ENCODE measurements at regions of chr7 and their contacts with region 1.

Region 1: DNA sequence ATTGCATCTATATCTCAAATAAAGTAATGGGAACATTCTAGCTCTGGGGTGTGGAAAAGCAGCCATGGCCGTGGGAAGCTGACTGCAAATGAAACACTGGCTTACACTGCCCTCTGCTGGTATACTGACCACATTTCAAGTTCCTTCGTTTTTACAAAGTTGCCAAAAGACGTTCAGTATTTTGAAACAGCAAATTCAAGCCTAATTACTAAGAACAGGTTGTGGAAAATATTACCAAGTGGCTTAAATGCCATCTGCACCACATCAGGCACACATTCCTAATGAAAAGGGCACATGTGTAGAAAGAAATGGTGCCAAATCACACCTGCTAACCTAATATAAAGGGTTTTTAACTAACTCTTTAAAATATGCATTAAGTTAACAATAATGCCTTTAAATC is 83.9 kb downstream of the JAZF1 start:
- DNase-seq: peak; percentile 51
- ATAC-seq: no peak
- H3K4me3 Mint-ChIP-seq: no peak overlapping the region
- H3K27ac Mint-ChIP-seq: no peak overlapping the region
- H3K4me1 Mint-ChIP-seq: no peaks in the 10 kb centered on the region
- H3K27me3 Mint-ChIP-seq: no peaks in the 10 kb centered on the region

Region 2: DNA sequence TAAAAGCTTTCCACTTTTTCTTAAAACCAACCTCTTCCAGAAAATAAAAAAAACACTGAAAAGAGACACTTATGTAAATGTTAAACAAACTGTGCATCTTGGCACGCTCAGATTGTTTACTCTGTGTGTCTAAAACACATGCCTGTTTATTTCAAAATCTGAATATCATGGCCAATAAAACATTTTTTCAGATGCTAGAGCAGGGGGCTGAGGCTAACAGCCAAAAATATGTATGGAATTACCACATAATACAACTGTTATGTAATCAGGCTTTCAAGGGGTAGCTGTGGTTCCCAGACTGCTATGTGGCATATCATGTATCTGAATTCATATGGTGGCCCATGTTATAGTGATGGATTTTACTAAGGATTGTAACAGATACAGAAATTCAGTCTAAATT is 564.4 kb before region 1 on chr7:
- CTCF ChIA-PET with region 1: no interaction called
- POLR2A ChIA-PET with region 1: no interaction called
- DNase-seq: no peak
- ATAC-seq: no peak
- H3K4me3 Mint-ChIP-seq: no peak overlapping the region
- H3K27ac Mint-ChIP-seq: no peak overlapping the region
- H3K4me1 Mint-ChIP-seq: no peaks in the 10 kb centered on the region
- H3K27me3 Mint-ChIP-seq: no peaks in the 10 kb centered on the region

Region 3: DNA sequence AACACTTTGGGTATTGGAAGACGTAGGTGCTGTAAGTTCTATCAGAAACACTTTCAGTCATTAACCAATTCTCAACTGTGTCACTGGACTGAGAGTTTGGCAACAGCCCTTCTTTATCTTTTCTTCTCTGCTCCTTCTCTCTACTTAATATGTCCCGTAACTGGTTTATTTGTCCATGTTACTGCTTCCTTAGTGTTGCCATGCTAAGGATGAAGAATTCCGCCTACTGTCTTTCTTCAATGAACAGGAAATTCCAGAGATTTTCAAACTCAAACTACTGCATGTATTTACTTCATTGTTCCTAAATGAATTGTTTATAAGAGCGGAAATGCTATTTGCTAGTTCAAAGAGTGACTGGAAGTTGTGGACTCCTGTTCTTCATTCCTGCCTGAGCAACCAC is 213.0 kb before region 1 on chr7:
- CTCF ChIA-PET with region 1: no interaction called
- POLR2A ChIA-PET with region 1: no interaction called
- DNase-seq: no peak
- ATAC-seq: no peak
- H3K4me3 Mint-ChIP-seq: no peak overlapping the region
- H3K27ac Mint-ChIP-seq: no peak overlapping the region
- H3K4me1 Mint-ChIP-seq: no peaks in the 10 kb centered on the region
- H3K27me3 Mint-ChIP-seq: no peaks in the 10 kb centered on the region

Region 4: DNA sequence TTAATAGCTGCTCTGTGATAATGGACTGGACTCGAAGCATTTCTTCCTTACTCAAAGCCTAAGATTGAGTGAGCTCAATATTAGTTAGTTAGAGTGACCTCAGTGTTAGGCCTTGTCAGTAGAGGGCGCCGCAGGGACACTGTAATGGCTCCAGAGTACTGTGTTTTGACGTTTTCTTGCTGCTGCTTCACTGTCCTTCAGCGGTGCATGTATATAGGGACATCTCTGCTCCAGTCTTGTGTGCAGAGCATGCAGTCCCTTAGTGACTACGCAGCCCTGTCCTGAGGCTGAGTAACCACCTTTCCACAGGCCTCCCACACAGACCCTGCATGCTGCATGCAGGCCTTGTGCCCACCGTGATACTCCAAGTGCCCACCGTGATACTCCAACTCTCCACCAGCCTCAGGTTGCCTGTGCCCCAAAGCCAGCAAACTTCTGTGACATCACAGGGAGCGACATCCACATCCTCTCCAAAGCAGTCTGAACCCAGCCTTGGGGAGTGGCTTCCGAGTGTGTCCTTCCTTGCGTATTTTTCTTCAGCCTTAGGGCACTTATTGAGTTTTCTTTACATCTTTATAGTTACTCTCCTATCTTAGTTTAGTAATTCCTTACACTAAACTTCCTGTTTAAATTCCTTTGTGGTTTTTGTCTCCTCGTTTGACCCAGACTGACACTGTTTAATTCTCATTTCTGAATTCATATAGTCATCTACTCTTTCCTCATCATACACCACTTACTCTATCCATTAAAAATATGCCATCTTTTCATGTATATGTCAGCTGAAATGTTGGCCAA is 34.3 kb before region 1 on chr7:
- CTCF ChIA-PET with region 1: interaction called, 40 read pairs
- POLR2A ChIA-PET with region 1: no interaction called
- DNase-seq: peak; percentile 62
- ATAC-seq: peak; percentile 63
- H3K4me3 Mint-ChIP-seq: no peak overlapping the region
- H3K27ac Mint-ChIP-seq: no peak overlapping the region
- H3K4me1 Mint-ChIP-seq: no peaks in the 10 kb centered on the region
- H3K27me3 Mint-ChIP-seq: peaks cover 14% of the 10 kb centered on the region

Region 5: GRCh38 chr7:28078036-28078901 is 18.4 kb before region 1 on chr7:
- CTCF ChIA-PET with region 1: interaction called, 37 read pairs
- POLR2A ChIA-PET with region 1: no interaction called
- DNase-seq: peak; percentile 62
- ATAC-seq: no peak
- H3K4me3 Mint-ChIP-seq: no peak overlapping the region
- H3K27ac Mint-ChIP-seq: no peak overlapping the region
- H3K4me1 Mint-ChIP-seq: no peaks in the 10 kb centered on the region
- H3K27me3 Mint-ChIP-seq: peaks cover 9% of the 10 kb centered on the region

Region 6: GRCh38 chr7:28083164-28083997 is 13.3 kb before region 1 on chr7:
- CTCF ChIA-PET with region 1: interaction called, 37 read pairs
- POLR2A ChIA-PET with region 1: no interaction called
- DNase-seq: no peak
- ATAC-seq: no peak
- H3K4me3 Mint-ChIP-seq: no peak overlapping the region
- H3K27ac Mint-ChIP-seq: no peak overlapping the region
- H3K4me1 Mint-ChIP-seq: peaks cover under 1% of the 10 kb centered on the region
- H3K27me3 Mint-ChIP-seq: peaks cover 2% of the 10 kb centered on the region